Ascending aorta (tissue), 2 donors: ENCODE measurements at regions of chr12 and their contacts with region 1.

Region 1: DNA sequence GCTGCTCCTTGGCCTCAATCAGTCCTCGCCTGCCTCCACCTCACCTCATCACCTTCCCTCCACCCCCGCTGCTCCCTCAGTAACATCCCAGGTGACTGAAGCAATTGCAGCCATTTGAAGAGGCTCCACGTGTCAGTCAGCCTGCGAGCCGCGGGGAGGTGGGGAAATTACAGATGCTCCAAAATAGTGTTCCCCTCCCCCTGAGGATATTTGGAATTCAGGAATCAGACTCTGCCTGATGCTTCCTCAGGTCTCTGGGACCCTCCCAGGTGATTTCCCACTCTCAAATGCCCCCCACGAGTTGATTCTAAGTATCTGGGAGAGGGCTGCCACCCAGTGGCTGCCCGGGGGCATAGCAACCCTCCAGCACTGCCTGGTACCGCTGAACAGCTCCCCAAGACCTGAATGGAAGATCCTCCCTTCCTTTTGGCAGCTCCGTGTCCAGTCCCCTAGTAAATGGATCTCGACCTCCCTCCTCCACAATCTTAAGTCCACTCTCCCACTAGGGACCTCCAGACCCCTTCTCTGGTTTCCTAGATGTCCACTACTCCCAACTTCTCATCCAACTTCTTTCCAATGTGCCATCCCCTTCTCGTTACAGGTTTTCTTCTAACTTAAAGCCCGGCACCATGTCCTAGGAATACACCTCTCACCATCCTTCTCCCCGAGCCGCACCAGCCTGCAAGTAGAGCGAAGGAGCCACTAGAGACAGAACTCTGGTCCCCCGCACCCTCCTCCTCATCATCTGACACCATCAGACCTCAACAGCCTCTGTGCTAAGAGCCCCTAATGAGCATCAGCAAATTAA is 1.4 kb upstream of the ASIC1 start:
- DNase-seq: no peak
- H3K4me3 ChIP-seq: no peak overlapping the region
- H3K27ac ChIP-seq: no peak overlapping the region
- H3K4me1 ChIP-seq: peaks cover 2 to 5% of the 10 kb centered on the region in 2 donors
- H3K27me3 ChIP-seq: no peaks in the 10 kb centered on the region
- CTCF ChIP-seq: peak; percentile 78 to 94 (median 92)

Region 2: DNA sequence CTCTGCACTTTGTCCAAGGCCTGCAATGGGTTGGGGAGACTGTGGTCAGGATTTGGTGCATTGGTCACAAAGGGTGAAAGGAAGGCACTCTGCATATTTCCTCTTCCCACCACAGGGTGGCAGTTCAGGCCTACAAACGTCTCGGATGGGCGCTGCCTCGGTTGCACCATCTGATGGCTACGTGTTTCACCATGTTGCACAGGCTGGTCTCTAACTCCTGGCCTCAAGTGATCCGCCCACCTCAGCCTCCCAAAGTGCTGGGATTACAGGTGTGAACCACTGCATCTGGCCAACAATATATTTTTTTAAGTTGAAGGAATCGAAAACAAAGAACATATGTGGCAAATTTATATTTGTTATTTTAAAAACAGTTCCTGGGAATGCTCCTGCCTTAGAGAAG is 279.6 kb before region 1 on chr12:
- intact Hi-C with region 1: loop called (anchors 5 kb)
- DNase-seq: peak in 1 of 2 donors; percentile 78
- H3K4me3 ChIP-seq: no peak overlapping the region
- H3K27ac ChIP-seq: no peak overlapping the region
- H3K4me1 ChIP-seq: no peaks in the 10 kb centered on the region
- H3K27me3 ChIP-seq: no peaks in the 10 kb centered on the region
- CTCF ChIP-seq: peak; percentile 70 to 83 (median 80)

Region 3: GRCh38 chr12:49967042-49967776 is 88.8 kb before region 1 on chr12:
- intact Hi-C with region 1: loop called (anchors 2 kb)
- DNase-seq: peak; percentile 36 to 91
- H3K4me3 ChIP-seq: peak overlapping the region; percentile 44 to 51
- H3K27ac ChIP-seq: no peak overlapping the region
- H3K4me1 ChIP-seq: peaks cover 0 to 17% of the 10 kb centered on the region in 2 donors
- H3K27me3 ChIP-seq: no peaks in the 10 kb centered on the region
- CTCF ChIP-seq: peak; percentile 76 to 95 (median 83)

Region 4: DNA sequence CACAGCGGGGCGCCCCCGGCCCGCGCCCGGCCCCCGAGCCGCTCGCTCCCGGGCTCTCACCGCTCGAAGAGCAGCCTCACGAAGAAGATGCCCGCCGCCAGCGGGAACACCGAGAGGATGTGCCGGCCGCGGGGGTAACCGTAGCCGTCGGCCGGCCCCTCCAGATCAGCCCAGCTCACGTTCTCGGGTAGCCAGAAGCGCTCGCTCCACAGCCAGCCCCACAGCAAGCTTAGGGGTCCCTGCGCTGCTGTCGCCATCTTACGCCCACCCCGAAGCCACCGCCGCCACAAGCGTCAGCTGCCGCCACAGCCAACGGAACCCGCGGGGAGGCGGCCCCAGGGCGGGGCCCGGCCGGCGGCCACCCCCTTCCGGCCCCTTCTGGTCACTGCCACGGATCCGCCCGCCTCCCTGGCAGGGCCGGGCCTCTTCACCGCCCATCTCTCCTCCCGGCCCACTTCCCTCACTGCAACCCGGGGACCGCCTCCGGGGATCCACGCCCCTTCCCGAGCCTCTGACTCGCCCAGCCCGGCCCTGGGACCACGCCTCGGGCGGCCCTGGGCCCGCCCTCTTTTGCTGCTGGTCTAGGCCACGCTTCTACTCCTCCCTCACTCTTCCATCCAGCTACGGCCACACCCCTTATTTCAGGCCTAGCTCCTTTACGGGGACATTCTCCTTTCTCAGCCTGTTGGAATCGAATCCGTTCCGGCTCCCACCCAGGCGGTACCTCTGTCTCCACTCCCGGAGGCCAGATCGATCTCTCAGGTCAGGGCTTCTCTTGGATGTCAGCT is 111.2 kb after region 1 on chr12 and contains the start of gene CERS5:
- intact Hi-C with region 1: no loop called
- DNase-seq: peak; percentile 98 to 100
- H3K4me3 ChIP-seq: peak within 1 kb of the TSS; percentile 85 to 98
- H3K27ac ChIP-seq: peak within 1 kb of the TSS; percentile 98 to 99
- H3K4me1 ChIP-seq: peaks cover 0 to 14% of the 10 kb centered on the region in 2 donors
- H3K27me3 ChIP-seq: no peaks in the 10 kb centered on the region
- CTCF ChIP-seq: peak in 2 of 3 experiments; percentile 12 to 28
- total RNA-seq, gene CERS5: 29.7 TPM